ENCODE measurements at regions of chr1 and their contacts with region 1.

Region 1: GRCh38 chr1:155135415-155136028 is at the start of gene SLC50A1:
- DNase-seq: peak; percentile 95
- H3K4me3 Mint-ChIP-seq: peak within 1 kb of the TSS; percentile 97
- H3K27ac Mint-ChIP-seq: peak within 1 kb of the TSS; percentile 98
- H3K4me1 Mint-ChIP-seq: peaks cover 49% of the 10 kb centered on the region
- H3K27me3 Mint-ChIP-seq: peaks cover 5% of the 10 kb centered on the region
- total RNA-seq, gene SLC50A1: 50.4 to 52.6 TPM

Region 2: GRCh38 chr1:155091071-155091709 is 44.3 kb before region 1 on chr1:
- CTCF ChIA-PET with region 1: interaction called, 25 read pairs
- POLR2A ChIA-PET with region 1: interaction called, 4 read pairs
- DNase-seq: peak; percentile 81
- H3K4me3 Mint-ChIP-seq: no peak overlapping the region
- H3K27ac Mint-ChIP-seq: no peak overlapping the region
- H3K4me1 Mint-ChIP-seq: peaks cover 10% of the 10 kb centered on the region
- H3K27me3 Mint-ChIP-seq: peaks cover 22% of the 10 kb centered on the region

Region 3: DNA sequence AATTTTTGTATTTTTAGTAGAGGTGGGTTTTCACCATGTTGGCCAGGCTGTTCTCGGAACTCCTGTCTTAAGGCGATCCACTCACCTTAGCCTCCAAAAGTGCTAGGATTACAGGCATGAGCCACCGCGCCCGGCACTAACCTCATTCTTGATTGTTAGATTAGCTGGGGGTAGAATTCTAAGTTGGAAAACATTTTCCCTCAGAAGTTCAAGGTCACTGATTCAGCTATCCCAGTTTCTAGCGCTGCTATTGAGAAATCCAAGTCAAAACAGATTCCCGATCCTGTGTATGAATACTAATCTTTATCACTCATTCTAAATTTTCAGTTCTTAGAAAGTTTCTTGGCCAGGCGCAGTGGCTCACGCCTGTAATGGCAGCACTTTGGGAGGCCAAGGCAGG is 32.2 kb before region 1 on chr1:
- CTCF ChIA-PET with region 1: no interaction called
- POLR2A ChIA-PET with region 1: no interaction called
- DNase-seq: no peak
- H3K4me3 Mint-ChIP-seq: no peak overlapping the region
- H3K27ac Mint-ChIP-seq: no peak overlapping the region
- H3K4me1 Mint-ChIP-seq: no peaks in the 10 kb centered on the region
- H3K27me3 Mint-ChIP-seq: peaks cover 19% of the 10 kb centered on the region

Region 4: GRCh38 chr1:155277896-155278688 is 142.6 kb after region 1 on chr1:
- CTCF ChIA-PET with region 1: no interaction called
- POLR2A ChIA-PET with region 1: no interaction called
- DNase-seq: peak; percentile 70
- H3K4me3 Mint-ChIP-seq: peak overlapping the region; percentile 56
- H3K27ac Mint-ChIP-seq: no peak overlapping the region
- H3K4me1 Mint-ChIP-seq: peaks cover 27% of the 10 kb centered on the region
- H3K27me3 Mint-ChIP-seq: peaks cover 4% of the 10 kb centered on the region